ENCODE measurements at regions of chr12 and their contacts with region 1.

Region 1: GRCh38 chr12:51172515-51173431 is at the start of gene TFCP2:
- DNase-seq: peak; percentile 93
- ATAC-seq: peak; percentile 92
- H3K4me3 ChIP-seq: peak within 1 kb of the TSS; percentile 59 to 96 (median 94)
- H3K27ac ChIP-seq: peak within 1 kb of the TSS; percentile 99
- H3K4me1 ChIP-seq: peaks cover 26% of the 10 kb centered on the region
- H3K27me3 ChIP-seq: no peaks in the 10 kb centered on the region
- CTCF ChIP-seq: 0 out of 2 replicates have a peak, but pooled peaks have one; percentile 10
- EP300 ChIP-seq: no peak
- POLR2A ChIP-seq: peak; percentile 68 to 87
- RAD21 ChIP-seq: no peak
- total RNA-seq, gene TFCP2: 10.0 and 17.4 TPM in 2 replicates

Region 2: DNA sequence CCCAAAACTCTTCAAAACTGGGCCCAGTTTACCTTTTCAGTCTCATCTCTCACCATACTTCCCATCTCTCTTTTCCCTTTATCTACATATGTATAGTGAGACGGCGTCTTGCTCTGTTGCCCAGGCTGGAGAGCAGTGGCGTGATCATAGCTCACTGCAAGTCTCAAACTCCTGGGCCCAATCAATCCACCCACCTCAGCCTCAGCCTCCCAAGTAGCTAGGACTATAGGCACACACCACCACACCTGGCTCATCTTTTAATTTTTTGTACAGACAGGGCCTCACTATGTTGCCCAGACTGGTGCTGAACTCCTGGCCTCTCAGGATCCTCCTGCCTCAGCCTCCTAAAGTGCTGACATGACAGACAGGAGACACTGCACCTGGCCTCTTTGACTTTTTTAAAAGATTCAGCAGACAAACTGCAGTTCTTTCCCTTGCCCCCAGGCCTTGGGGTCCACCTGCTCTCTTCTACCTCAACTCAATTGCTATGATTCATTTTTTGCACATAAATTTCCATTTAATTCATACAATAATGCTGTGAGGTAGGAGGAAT is 33.4 kb before region 1 on chr12:
- CTCF ChIA-PET with region 1: no interaction called
- POLR2A ChIA-PET with region 1: no interaction called
- in situ Hi-C with region 1: no loop called
- intact Hi-C with region 1: no loop called
- DNase-seq: no peak
- ATAC-seq: no peak
- H3K4me3 ChIP-seq: no peak overlapping the region
- H3K27ac ChIP-seq: no peak overlapping the region
- H3K4me1 ChIP-seq: no peaks in the 10 kb centered on the region
- H3K27me3 ChIP-seq: no peaks in the 10 kb centered on the region
- CTCF ChIP-seq: no peak
- EP300 ChIP-seq: no peak
- POLR2A ChIP-seq: no peak
- RAD21 ChIP-seq: no peak

Region 3: GRCh38 chr12:51160814-51161459 is 11.8 kb before region 1 on chr12:
- CTCF ChIA-PET with region 1: no interaction called
- POLR2A ChIA-PET with region 1: interaction called, 13 read pairs
- in situ Hi-C with region 1: no loop called
- intact Hi-C with region 1: no loop called
- DNase-seq: peak; percentile 77
- ATAC-seq: peak; percentile 84
- H3K4me3 ChIP-seq: no peak overlapping the region
- H3K27ac ChIP-seq: peak overlapping the region; percentile 49
- H3K4me1 ChIP-seq: peaks cover 18% of the 10 kb centered on the region
- H3K27me3 ChIP-seq: no peaks in the 10 kb centered on the region
- CTCF ChIP-seq: no peak
- EP300 ChIP-seq: no peak
- POLR2A ChIP-seq: no peak
- RAD21 ChIP-seq: no peak

Region 4: GRCh38 chr12:51217968-51218606 is 45.3 kb after region 1 on chr12 and contains the start of gene POU6F1:
- CTCF ChIA-PET with region 1: no interaction called
- POLR2A ChIA-PET with region 1: interaction called, 10 read pairs
- in situ Hi-C with region 1: no loop called
- intact Hi-C with region 1: loop called (anchors 2 kb)
- DNase-seq: peak; percentile 57
- ATAC-seq: peak; percentile 86
- H3K4me3 ChIP-seq: peak within 1 kb of the TSS; percentile 71 to 79 (median 73)
- H3K27ac ChIP-seq: peak within 1 kb of the TSS; percentile 44
- H3K4me1 ChIP-seq: peaks cover 16% of the 10 kb centered on the region
- H3K27me3 ChIP-seq: no peaks in the 10 kb centered on the region; a peak in 1 of 5 replicates
- CTCF ChIP-seq: no peak; the same call in 1 of the 2 replicates
- EP300 ChIP-seq: no peak
- POLR2A ChIP-seq: 0 out of 4 replicates have a peak, but pooled peaks of 1 of the 2 experiments have one; percentile 36
- RAD21 ChIP-seq: no peak
- total RNA-seq, gene POU6F1: 0.41 and 0.51 TPM in 2 replicates

Region 5: GRCh38 chr12:51238510-51239334 is 65.9 kb after region 1 on chr12 and contains the start of gene DAZAP2:
- CTCF ChIA-PET with region 1: no interaction called
- POLR2A ChIA-PET with region 1: interaction called, 10 read pairs
- in situ Hi-C with region 1: no loop called
- intact Hi-C with region 1: no loop called
- DNase-seq: peak; percentile 88
- ATAC-seq: peak; percentile 97
- H3K4me3 ChIP-seq: peak within 1 kb of the TSS; percentile 99 to 100 (median 100)
- H3K27ac ChIP-seq: peak within 1 kb of the TSS; percentile 100
- H3K4me1 ChIP-seq: peaks cover 18% of the 10 kb centered on the region
- H3K27me3 ChIP-seq: no peaks in the 10 kb centered on the region; a peak in 1 of 5 replicates
- CTCF ChIP-seq: no peak
- EP300 ChIP-seq: no peak
- POLR2A ChIP-seq: peak; percentile 59 to 86
- RAD21 ChIP-seq: peak; percentile 37; the same call in 1 of the 2 replicates
- total RNA-seq, gene DAZAP2: 64.5 and 84.2 TPM in 2 replicates

Region 6: DNA sequence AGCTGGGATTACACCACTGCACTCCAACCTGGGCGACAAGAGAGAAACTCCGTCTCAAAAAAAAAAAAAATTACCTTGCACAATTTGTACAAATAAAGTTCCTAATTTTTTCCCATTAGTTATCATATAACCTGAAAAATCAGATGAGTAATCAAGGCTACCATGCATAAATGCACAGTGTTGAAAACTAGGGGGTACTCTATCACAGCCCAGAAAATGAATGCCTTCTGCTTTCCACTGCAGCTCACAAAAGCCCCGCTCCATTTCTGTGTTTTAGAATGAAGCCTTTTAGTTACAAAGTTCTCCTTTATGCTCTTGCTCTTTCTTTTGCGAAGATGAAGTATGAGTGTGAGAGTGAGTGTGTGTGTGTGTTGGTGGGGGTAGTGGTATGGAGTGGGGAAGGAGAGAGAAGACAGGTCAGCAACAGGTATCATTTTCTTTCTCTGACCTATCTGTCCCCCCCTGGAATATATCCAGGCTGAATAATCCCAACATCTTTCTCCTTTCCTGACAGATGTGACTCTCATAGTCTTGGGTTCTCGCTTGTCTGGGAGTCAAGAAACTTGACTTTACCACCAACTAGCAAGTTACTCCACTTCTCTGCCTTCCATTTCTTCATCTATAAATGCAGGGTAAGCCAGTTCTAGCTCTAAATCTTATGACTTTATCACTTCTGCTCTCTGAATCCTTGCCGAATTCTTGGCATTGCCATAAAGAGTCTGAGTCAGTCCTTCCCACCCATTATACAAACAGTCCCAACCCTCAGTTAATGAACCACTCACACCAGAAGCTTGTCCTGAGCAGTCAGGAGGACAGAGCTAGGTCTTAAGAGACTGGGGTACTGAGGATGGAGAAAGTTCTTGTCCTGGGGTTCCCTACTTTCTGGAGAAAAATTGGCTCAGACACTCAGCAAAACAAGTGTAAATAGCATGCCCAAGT is 135.2 kb after region 1 on chr12:
- CTCF ChIA-PET with region 1: no interaction called
- POLR2A ChIA-PET with region 1: no interaction called
- in situ Hi-C with region 1: no loop called
- intact Hi-C with region 1: no loop called
- DNase-seq: no peak
- ATAC-seq: no peak
- H3K4me3 ChIP-seq: no peak overlapping the region
- H3K27ac ChIP-seq: no peak overlapping the region
- H3K4me1 ChIP-seq: no peaks in the 10 kb centered on the region
- H3K27me3 ChIP-seq: peaks cover 0 to 2% of the 10 kb centered on the region in 2 experiments; a peak in 1 of 5 replicates
- CTCF ChIP-seq: no peak
- EP300 ChIP-seq: no peak
- POLR2A ChIP-seq: no peak
- RAD21 ChIP-seq: no peak